AG04449 (cell line): ENCODE measurements at regions of chr20 and their contacts with region 1.

Region 1: DNA sequence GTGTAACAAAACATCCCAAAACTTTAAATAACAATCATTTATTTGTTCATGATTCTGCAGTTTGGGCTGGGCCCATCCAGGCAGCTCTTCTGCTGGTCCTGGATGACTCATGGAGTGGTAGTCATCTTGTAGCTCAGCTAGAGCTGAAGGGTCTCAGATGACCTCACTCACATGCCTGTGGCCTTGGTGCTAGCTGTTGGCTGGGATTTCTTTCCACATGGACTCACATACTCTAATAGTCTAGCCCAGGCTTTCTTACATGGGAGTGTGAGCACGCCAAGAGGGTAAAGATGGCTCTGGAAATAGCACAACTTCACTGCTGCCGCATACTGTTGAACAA is 78.1 kb upstream of the SRSF6 start:
- DNase-seq: peak; percentile 82
- H3K4me3 ChIP-seq: no peak overlapping the region
- CTCF ChIP-seq: no peak

Region 2: DNA sequence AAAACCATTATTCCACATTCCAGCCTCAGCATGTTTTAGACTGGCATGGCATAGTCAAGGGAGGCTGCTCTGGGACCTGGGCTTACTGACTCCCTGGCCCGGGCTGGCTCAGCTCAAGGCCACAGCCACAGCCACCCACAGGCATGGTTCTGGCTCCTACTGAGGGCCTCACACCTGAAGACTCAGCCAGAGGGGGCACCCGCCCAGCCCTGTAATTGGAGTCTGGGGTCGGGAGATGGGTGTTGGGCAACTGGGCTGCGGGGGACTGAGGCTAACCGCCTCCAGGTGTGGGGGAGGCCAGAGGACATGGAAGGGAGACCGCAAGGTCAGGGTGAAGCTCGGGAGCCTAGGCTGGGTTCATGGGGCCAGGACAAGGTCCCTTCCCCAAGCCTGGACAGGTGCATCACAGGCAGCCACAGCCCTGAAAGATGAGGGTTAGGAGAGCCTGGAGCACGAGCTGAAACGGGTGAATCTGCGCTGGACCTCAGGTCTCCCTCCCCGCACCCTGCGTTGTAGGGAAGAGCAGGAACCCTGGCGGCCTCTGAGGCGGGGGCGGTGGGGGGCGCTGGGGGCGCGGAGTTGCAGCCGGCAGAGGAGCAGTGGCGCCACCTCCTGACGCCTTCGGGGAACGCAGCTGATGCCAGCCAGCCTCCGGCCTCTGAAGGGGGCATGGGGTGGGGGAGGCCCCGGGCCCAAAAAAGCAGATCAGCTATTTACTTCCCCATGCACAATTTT is 10.5 kb after region 1 on chr20:
- CTCF ChIA-PET with region 1: interaction called, 11 read pairs
- POLR2A ChIA-PET with region 1: no interaction called
- DNase-seq: no peak
- H3K4me3 ChIP-seq: no peak overlapping the region
- CTCF ChIP-seq: peak; percentile 55